ENCODE measurements at regions of chr19 and their contacts with region 1.

Region 1: DNA sequence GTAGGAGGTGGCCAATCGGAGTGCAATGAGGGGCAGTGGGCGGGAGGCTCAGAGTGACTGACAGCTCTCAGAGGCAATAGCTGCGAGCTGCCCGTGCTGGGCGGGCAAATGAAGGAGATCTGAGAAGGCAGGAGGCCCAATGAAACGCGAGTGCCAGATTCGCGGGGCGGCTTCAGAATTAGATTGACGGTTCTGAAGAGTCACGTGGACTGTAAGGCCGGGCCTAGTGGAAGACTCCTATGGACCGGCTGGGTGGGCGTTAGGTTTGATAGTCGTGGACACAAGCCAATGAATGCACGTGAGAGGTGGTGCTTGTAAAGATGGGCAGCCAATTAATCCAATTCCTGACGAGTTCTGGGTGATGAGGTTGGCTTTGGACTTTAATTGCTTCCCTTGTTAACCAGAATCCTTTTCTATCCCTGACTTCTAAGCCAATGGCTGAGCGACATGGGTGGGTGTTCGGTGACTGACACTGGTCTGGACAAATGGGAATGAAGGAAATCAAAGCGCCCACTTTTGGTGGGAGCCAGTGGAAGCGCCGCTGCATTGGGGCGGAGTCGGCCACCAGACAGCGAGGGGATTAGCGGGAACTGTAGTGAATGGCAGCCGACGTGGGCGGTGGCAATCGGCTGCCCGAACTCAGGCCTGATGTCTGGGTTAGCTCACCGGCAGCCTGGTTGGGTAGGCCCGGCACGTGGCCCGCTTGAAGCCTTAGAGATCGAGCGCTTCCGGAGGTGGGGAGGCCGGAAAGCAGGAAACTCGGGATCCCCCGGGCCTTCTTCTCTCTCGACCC is 524 bp upstream of the KHSRP start:
- DNase-seq: peak; percentile 99 to 100
- ATAC-seq: peak; percentile 92 to 96 (median 96)
- H3K4me3 ChIP-seq: peak overlapping the region in 9 of 10 donors; percentile 1 to 90 (median 39)
- H3K27ac ChIP-seq: peak overlapping the region; percentile 32 to 94 (median 80)
- H3K4me1 ChIP-seq: peaks cover 10 to 40% (median 29%) of the 10 kb centered on the region in 9 donors
- H3K27me3 ChIP-seq: no peaks in the 10 kb centered on the region
- CTCF ChIP-seq: peak in 1 of 9 donors; percentile 10

Region 2: GRCh38 chr19:5622463-5623396 is 802.4 kb before region 1 on chr19 and contains the starts of genes SAFB and SAFB2:
- intact Hi-C with region 1: no loop called
- DNase-seq: peak; percentile 99 to 100
- ATAC-seq: peak; percentile 95 to 98 (median 96)
- H3K4me3 ChIP-seq: peak within 1 kb of the TSS; percentile 89 to 100 (median 97)
- H3K27ac ChIP-seq: peak within 1 kb of the TSS; percentile 93 to 98 (median 96)
- H3K4me1 ChIP-seq: peaks cover 23 to 83% (median 76%) of the 10 kb centered on the region in 9 donors
- H3K27me3 ChIP-seq: no peaks in the 10 kb centered on the region
- CTCF ChIP-seq: no peak
- total RNA-seq, gene SAFB: 44.0 to 72.5 (median 50.2) TPM
- total RNA-seq, gene SAFB2: 34.4 to 70.4 (median 45.9) TPM

Region 3: DNA sequence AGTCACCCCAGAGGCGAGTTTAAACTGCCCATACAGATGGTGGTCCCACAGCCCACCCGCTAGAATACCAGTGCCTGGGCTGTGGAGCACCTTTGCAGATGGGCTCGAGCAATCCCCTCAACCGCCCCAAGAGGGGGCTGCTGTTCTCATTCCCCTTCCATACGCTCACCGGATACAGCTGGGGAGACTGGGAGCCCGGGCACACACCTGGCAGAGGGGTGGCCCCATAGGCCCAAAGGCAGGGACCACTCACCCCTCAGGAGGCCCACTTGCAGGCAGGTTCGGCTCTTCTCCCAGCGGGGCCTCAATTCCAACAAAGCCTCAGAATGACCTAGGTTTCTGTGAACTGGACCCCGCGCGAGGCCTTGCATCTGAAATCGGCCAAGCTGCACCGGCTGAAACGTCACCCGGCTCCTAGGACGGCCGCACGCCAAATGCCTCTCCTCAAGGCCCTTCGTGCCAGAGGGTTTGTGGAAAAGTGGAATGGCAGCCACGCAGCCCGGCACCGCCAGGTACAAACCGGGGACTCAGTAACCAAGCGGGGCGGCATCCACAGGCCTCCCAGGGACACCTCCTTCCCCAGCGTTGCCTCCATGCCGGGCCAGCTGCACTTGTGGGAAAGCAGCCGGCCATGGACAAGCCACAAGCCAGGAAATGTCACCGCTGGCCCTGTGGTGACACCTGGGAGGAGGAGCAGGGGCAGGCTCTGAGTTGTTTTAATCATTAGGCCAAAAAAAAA is 164.1 kb before region 1 on chr19:
- intact Hi-C with region 1: no loop called
- DNase-seq: no peak
- ATAC-seq: peak in 7 of 8 donors; percentile 38 to 64 (median 61)
- H3K4me3 ChIP-seq: no peak overlapping the region
- H3K27ac ChIP-seq: no peak overlapping the region
- H3K4me1 ChIP-seq: peaks cover 0 to 27% (median 8%) of the 10 kb centered on the region in 9 donors
- H3K27me3 ChIP-seq: no peaks in the 10 kb centered on the region
- CTCF ChIP-seq: peak; percentile 32 to 66 (median 55)

Region 4: DNA sequence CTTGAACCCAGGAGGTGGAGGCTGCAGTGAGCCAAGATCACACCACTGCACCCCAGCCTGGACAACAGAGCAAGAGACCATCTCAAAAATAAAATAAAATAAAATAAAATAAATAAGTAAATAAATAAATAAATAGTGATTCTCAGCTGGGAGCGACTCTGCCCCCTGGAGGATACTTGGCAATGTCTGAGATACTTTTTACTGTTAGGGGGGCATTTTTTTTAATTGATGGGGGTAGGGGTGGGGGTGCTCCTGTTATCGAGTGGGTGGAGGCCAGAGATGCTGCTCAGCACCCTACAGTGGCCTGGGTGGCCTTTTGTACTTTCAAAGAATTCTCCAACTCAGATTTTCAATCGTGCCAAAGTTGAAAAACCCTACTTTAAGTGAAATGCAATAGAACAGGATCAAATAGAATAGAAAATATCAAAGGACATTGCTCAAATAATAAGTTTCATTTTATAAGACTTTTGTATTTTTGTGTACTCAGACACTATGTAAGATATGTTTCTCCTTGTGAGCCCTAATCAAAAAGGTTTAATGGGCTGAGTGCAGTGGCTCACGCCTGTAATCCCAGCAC is 70.9 kb before region 1 on chr19:
- intact Hi-C with region 1: no loop called
- DNase-seq: no peak
- ATAC-seq: no peak
- H3K4me3 ChIP-seq: no peak overlapping the region
- H3K27ac ChIP-seq: no peak overlapping the region
- H3K4me1 ChIP-seq: no peaks in the 10 kb centered on the region
- H3K27me3 ChIP-seq: no peaks in the 10 kb centered on the region
- CTCF ChIP-seq: peak in 8 of 9 donors; percentile 7 to 55 (median 44)

Region 5: GRCh38 chr19:6393074-6393983 is 31.8 kb before region 1 on chr19 and contains the start of gene GTF2F1:
- intact Hi-C with region 1: loop called in 2 of 10 experiments (anchors 1 kb)
- DNase-seq: peak; percentile 96
- ATAC-seq: peak; percentile 93 to 97 (median 95)
- H3K4me3 ChIP-seq: peak within 1 kb of the TSS; percentile 51 to 97 (median 79)
- H3K27ac ChIP-seq: peak within 1 kb of the TSS; percentile 82 to 98 (median 96)
- H3K4me1 ChIP-seq: peaks cover 0 to 19% (median 12%) of the 10 kb centered on the region in 9 donors
- H3K27me3 ChIP-seq: no peaks in the 10 kb centered on the region
- CTCF ChIP-seq: peak in 5 of 9 donors; percentile 1 to 45 (median 30)
- total RNA-seq, gene GTF2F1: 26.4 to 36.4 (median 30.8) TPM

Region 6: GRCh38 chr19:6460101-6460853 is 35.1 kb after region 1 on chr19:
- intact Hi-C with region 1: loop called in 1 of 10 experiments (anchors 2 kb)
- DNase-seq: peak; percentile 97 to 98
- ATAC-seq: peak; percentile 92 to 98 (median 96)
- H3K4me3 ChIP-seq: peak overlapping the region; percentile 61 to 97 (median 72)
- H3K27ac ChIP-seq: peak overlapping the region in 9 of 10 donors; percentile 38 to 87 (median 65)
- H3K4me1 ChIP-seq: peaks cover 5 to 29% (median 17%) of the 10 kb centered on the region in 9 donors
- H3K27me3 ChIP-seq: peaks cover 7 to 34% (median 30%) of the 10 kb centered on the region in 7 donors
- CTCF ChIP-seq: peak in 8 of 9 donors; percentile 33 to 73 (median 52)

Measured in heart right ventricle (tissue), 16 donors.